ENCODE measurements at regions of chr10 and their contacts with region 1.

Region 1: GRCh38 chr10:97553575-97554031 is 19.0 kb upstream of the ANKRD2 start:
- DNase-seq: peak; percentile 82
- H3K4me3 ChIP-seq: no peak overlapping the region
- H3K27ac ChIP-seq: no peak overlapping the region
- H3K4me1 ChIP-seq: peaks cover 3% of the 10 kb centered on the region
- H3K27me3 ChIP-seq: no peaks in the 10 kb centered on the region
- CTCF ChIP-seq: peak; percentile 83 to 96
- POLR2A ChIP-seq: no peak

Region 2: DNA sequence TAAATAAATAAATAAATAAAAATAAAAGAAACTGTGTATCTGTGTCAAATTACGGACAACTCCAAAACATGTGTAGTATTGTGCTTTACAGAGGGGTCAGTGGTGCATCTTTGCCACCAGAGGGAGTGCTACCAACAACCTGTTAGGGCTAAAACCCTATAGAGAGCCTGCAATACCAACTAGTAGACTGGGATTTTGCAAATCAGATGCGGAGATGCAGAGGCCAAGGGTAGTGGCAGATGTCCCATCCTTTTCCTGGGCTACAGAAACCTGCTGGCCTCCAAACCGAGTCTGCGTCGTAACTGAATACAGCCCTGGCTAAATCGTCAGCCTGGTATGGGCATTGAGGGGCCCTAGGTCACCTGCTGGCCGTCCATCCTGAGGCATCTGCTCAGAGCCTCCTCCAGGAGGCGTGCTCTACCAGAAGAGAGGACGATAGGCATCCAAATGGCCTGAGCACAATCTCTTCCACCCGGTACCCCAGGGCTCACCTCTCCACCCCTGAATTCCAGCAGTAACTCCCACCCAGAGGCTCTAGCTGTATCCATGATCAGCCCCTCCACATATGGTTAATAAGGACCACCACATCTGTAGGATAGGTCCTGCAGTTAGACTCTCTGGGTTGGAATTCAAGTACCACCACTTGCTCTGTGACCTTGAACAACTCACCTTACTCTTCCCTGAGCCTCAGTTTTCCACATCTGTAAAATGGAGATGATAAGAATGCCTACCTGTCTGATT is 146.2 kb before region 1 on chr10:
- CTCF ChIA-PET with region 1: no interaction called
- POLR2A ChIA-PET with region 1: no interaction called
- dilution Hi-C with region 1: no loop called
- intact Hi-C with region 1: loop called (anchors 2 kb)
- DNase-seq: peak; percentile 86
- H3K4me3 ChIP-seq: peak overlapping the region in 1 of 3 experiments; percentile 31
- H3K27ac ChIP-seq: no peak overlapping the region
- H3K4me1 ChIP-seq: no peaks in the 10 kb centered on the region
- H3K27me3 ChIP-seq: no peaks in the 10 kb centered on the region
- CTCF ChIP-seq: peak; percentile 59 to 76
- POLR2A ChIP-seq: no peak

Region 3: DNA sequence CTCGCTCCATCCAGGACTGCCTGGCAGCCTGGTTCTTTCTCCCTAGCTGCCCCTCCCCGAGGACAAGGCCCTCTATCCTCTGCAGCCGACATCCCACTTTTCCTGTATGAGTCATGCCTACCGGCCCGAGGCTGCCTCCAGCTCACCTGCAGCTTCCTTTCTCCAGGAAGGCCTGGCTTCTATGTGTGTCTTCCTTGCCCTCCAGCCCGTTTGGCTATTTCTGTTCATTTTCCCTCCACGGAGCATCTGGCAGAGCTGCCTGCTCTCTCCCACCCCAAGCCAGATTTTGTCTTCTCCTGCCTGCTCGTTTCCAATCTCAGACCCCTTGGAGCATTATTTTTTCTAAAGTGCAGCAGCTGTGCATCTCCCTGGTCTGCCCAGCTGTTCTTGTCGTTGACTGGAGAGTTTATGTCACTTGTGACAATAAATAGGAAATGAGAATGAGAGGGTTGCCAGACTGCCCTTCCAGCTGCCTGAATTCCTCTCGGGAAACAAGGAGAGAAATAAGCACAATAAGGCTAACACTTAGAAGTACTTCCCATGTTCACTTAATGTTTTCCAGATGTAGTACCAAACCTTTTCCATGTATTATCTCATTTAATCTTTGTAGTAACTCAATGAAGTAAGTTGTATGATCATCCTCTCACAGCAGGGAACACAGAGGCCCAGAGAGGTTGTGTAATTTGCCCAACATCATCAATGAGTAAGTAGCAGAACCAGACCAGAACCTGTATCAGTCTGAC is 35.1 kb before region 1 on chr10:
- CTCF ChIA-PET with region 1: interaction called, 11 read pairs
- POLR2A ChIA-PET with region 1: no interaction called
- dilution Hi-C with region 1: no loop called
- intact Hi-C with region 1: no loop called
- DNase-seq: peak; percentile 64
- H3K4me3 ChIP-seq: no peak overlapping the region
- H3K27ac ChIP-seq: peak overlapping the region; percentile 56
- H3K4me1 ChIP-seq: peaks cover 28% of the 10 kb centered on the region
- H3K27me3 ChIP-seq: no peaks in the 10 kb centered on the region
- CTCF ChIP-seq: no peak
- POLR2A ChIP-seq: no peak

Region 4: DNA sequence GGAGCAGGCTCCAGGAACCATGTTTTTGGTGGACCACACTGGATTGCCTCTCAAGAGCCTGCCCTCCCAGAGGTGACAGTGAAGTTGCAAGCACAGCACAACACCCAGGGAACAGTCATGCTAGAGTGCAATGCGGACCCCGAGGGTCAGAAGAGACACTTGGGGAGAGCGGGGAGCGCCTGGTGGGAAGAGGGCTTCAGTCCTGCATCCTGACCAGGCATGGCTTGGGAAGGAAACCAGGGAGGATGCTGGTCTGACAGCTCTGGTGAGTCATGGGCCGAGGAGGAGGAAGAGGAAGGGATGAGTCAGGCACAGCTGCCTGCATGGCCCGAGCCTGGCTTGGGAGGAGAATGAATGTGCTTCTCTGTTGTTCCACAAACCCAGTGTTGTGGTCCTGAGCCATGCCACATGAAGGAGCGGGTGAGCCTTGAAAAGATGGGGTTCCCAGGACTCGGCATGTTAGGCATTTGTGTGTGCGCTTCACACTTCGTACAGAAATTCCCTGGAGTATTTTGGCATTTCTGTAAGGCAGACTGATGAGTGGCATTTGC is 10.5 kb before region 1 on chr10:
- CTCF ChIA-PET with region 1: interaction called, 93 read pairs
- POLR2A ChIA-PET with region 1: no interaction called
- dilution Hi-C with region 1: no loop called
- intact Hi-C with region 1: no loop called
- DNase-seq: peak; percentile 98
- H3K4me3 ChIP-seq: no peak overlapping the region
- H3K27ac ChIP-seq: peak overlapping the region; percentile 99
- H3K4me1 ChIP-seq: peaks cover 61% of the 10 kb centered on the region
- H3K27me3 ChIP-seq: no peaks in the 10 kb centered on the region
- CTCF ChIP-seq: no peak
- POLR2A ChIP-seq: peak; percentile 80

Region 5: DNA sequence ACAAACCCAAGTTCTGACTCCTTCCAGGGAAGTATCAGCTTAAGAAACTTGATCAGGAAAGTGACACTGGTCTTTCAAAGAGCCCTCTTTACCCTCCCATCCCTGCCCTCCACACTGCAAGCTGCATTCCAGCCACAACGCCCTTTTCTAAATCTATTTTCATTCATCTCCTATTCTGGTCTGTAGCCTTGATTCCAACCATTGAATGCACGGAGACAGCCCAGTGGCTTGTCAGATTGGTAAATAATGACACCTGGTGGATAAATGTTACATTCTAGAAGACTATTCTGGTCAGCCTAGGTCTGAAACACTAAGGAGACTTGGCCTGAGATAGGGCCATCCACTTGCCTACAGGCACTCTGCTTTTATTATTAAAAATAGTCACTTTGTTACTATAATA is 58.8 kb after region 1 on chr10:
- CTCF ChIA-PET with region 1: interaction called, 17 read pairs
- POLR2A ChIA-PET with region 1: no interaction called
- dilution Hi-C with region 1: no loop called
- intact Hi-C with region 1: no loop called
- DNase-seq: peak; percentile 71
- H3K4me3 ChIP-seq: no peak overlapping the region
- H3K27ac ChIP-seq: no peak overlapping the region
- H3K4me1 ChIP-seq: no peaks in the 10 kb centered on the region
- H3K27me3 ChIP-seq: no peaks in the 10 kb centered on the region
- CTCF ChIP-seq: peak in 1 of 2 donors; percentile 38
- POLR2A ChIP-seq: no peak

Measured in endothelial cell of umbilical vein (primary cell).